ENCODE measurements at regions of chr10 and their contacts with region 1.

Region 1: GRCh38 chr10:60964257-60965235 is 20.6 kb upstream of the RHOBTB1 start:
- DNase-seq: peak; percentile 98
- ATAC-seq: peak; percentile 86
- H3K4me3 ChIP-seq: peak overlapping the region; percentile 24
- H3K27ac ChIP-seq: peak overlapping the region; percentile 44
- H3K4me1 ChIP-seq: peaks cover 37% of the 10 kb centered on the region
- H3K27me3 ChIP-seq: no peaks in the 10 kb centered on the region
- CTCF ChIP-seq: peak; percentile 100

Region 2: DNA sequence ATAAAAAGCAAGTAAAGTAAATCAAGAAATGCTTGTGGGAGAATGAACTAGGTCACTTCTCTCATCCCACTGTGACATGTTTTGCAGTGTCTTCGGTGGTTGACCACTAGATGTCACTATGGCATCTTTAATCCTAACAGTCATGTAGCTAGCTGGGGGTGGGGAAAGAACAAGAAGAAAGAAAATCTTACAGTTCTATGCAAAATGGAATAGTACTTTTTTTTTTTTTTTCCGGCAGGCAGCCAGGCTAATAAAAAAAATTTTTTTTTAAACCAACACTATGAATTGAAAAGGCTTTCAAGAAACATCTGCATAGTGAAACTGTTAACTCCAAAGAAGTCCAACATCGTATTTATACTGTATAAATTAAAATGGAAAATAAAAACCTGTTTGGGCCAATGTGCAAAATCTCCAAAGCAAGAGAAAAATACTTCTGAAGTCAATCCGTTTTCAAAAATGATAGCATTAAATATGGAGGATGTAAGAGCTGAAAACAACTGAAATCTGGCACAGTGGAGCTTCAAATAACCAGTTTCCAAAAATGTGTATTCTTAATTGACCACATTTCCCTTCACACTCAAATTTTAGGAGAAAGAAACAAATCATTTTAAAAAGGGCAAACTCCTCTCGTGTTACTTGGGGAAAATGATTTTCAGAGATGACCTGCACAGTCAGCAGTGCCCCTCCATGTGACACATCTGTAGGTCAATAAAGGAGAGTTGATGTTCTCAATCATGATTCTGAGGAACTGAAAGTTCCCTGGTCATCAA is 147.7 kb before region 1 on chr10:
- CTCF ChIA-PET with region 1: interaction called, 9 read pairs
- POLR2A ChIA-PET with region 1: no interaction called
- intact Hi-C with region 1: loop called (anchors 1 kb)
- DNase-seq: peak; percentile 97
- ATAC-seq: peak; percentile 93
- H3K4me3 ChIP-seq: no peak overlapping the region
- H3K27ac ChIP-seq: no peak overlapping the region
- H3K4me1 ChIP-seq: peaks cover 6% of the 10 kb centered on the region; the same call in 1 of the 2 replicates
- H3K27me3 ChIP-seq: no peaks in the 10 kb centered on the region
- CTCF ChIP-seq: peak; percentile 100

Region 3: GRCh38 chr10:60883187-60883586 is 81.4 kb before region 1 on chr10:
- CTCF ChIA-PET with region 1: interaction called, 6 read pairs
- POLR2A ChIA-PET with region 1: interaction called, 4 read pairs
- intact Hi-C with region 1: loop called (anchors 1 kb)
- DNase-seq: peak; percentile 82
- ATAC-seq: peak; percentile 84
- H3K4me3 ChIP-seq: no peak overlapping the region
- H3K27ac ChIP-seq: no peak overlapping the region
- H3K4me1 ChIP-seq: peaks cover 2% of the 10 kb centered on the region; the same call in 1 of the 2 replicates
- H3K27me3 ChIP-seq: no peaks in the 10 kb centered on the region
- CTCF ChIP-seq: peak; percentile 98

Region 4: GRCh38 chr10:61110188-61110920 is 145.8 kb after region 1 on chr10:
- CTCF ChIA-PET with region 1: no interaction called
- POLR2A ChIA-PET with region 1: no interaction called
- intact Hi-C with region 1: loop called (anchors 2 kb)
- DNase-seq: peak; percentile 92
- ATAC-seq: peak; percentile 79
- H3K4me3 ChIP-seq: 0 out of 2 replicates have a peak overlapping the region, but pooled peaks have one; percentile 3
- H3K27ac ChIP-seq: peak overlapping the region; percentile 63
- H3K4me1 ChIP-seq: peaks cover 24% of the 10 kb centered on the region
- H3K27me3 ChIP-seq: no peaks in the 10 kb centered on the region
- CTCF ChIP-seq: no peak

Region 5: GRCh38 chr10:61284222-61284890 is 319.8 kb after region 1 on chr10:
- CTCF ChIA-PET with region 1: interaction called, 4 read pairs
- POLR2A ChIA-PET with region 1: no interaction called
- intact Hi-C with region 1: loop called (anchors 1 kb)
- DNase-seq: peak; percentile 98
- ATAC-seq: peak; percentile 66
- H3K4me3 ChIP-seq: peak overlapping the region; percentile 13
- H3K27ac ChIP-seq: no peak overlapping the region
- H3K4me1 ChIP-seq: peaks cover 13% of the 10 kb centered on the region
- H3K27me3 ChIP-seq: no peaks in the 10 kb centered on the region
- CTCF ChIP-seq: peak; percentile 99